Common myeloid progenitor, CD34-positive (primary cell): ENCODE measurements at regions of chr1 and their contacts with region 1.

Region 1: DNA sequence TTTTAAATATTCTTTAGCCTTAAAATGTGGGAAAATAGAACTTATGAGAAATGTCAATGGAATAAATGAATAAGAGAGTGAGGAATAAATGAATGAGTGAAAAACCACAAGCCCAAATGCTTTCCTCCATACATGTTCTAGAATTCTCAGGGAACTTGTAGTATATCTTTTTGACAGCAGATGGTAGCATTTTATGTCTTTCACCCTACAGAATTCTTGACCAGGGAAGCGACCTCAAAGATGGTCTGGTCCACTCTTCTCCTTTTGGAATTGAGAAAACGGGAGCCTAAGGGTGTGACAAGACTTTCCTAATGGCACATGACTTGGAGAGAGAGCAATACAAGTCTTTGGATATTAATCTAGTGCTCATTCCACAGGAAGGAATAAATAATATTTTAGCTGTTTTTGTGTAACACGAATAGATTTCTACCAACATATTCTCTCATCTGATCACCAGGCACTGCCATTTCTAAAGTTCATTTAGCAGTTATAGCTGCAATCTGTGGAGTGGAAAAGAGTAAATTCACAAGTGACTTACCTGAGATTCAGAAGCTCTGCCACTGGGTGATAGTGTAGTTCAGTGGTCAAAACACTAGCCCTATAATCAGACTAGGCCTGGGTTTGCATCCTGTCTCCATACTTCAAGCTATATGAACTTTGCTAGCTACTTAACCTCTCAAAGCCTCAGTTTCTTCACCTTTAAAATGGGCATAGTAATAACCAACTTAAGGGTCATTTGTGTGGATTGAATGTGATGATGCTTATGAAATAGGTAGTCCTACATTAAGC is 15.0 kb upstream of the F5 start:
- DNase-seq: peak; percentile 41 to 57 (median 52)
- H3K4me3 ChIP-seq: no peak overlapping the region
- H3K27ac ChIP-seq: no peak overlapping the region
- H3K4me1 ChIP-seq: peaks cover 21 to 44% (median 28%) of the 10 kb centered on the region in 4 experiments
- H3K27me3 ChIP-seq: no peaks in the 10 kb centered on the region

Region 2: DNA sequence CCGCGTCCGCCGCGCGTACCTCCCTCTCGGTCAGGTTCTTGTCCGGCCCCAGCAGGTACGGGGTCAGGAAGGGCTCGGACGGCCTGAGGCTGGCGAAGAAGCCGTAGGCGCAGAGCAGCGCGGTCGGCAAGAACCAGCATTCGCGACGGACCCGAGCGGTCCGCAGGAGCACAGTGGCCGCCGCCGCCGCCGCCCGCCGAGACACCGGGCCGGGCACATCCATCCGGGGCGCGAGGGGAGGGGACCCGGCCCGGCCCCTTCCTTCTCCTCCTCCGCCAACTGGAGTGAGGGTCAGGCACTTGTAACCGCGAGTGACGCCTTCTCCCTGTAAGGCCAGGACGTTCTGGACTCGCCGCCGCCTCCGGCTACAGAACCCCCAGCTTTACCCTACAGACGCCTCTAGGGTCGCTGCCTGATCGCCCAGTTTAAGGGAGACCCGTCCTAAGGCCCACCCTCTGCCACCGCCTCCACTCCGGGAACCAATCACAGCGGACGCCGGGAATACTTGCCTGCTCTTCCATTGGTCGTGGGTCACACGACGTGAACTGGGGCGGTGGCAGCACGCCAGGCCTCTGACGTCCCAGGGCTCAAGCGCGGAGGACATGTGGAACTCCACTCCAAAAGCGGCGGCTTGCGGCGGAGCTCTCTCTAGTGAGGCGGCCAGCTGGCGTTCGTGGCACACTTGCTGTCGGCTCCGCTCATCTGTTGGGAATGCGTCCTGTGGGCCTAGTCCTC is 115.6 kb before region 1 on chr1 and contains the start of gene SLC19A2:
- CTCF ChIA-PET with region 1: no interaction called
- POLR2A ChIA-PET with region 1: no interaction called
- DNase-seq: peak; percentile 98 to 99 (median 99)
- H3K4me3 ChIP-seq: peak within 1 kb of the TSS; percentile 72 to 87 (median 80)
- H3K27ac ChIP-seq: peak within 1 kb of the TSS in 1 of 2 experiments; percentile 85
- H3K4me1 ChIP-seq: peaks cover 23 to 38% (median 31%) of the 10 kb centered on the region in 4 experiments
- H3K27me3 ChIP-seq: no peaks in the 10 kb centered on the region

Region 3: DNA sequence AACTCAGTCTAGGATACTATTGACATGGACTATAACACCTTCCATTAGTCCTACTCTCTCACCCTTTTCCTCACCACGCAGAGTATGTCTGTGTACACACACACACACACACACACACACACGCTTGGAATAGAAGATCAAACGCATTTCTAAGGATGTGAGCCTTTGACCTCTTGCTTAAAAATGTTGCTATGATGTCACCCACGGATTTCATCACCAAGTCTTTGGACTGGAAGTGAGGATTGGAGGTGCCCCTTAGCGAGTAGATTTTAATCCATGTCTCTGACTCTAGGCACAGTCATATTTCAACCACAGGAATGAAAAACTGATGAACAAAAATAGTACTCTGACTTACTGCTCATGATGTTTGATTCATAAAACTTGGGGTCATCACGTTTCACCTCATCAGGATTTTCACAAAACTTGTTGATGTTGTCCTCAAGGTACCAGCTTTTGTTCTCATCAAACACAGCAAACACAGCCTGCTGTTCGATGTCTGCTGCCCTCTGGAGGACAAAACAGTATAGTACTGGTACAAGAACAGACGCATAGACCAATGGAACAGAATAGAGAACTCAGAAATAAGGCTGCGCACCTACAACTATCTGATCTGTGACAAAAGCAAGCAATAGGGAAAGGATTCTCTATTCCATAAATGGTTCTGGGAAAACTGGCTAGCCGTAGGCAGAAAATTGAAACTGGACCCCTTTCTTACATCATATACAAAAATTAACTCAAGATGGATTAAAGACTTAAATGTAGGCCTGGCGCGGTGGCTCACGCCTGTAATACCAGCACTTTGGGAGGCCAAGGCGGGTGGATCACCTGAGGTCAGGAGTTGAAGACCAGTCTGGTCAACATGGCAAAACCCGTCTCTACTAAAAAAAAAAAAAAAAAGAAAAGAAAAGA is 54.9 kb before region 1 on chr1:
- CTCF ChIA-PET with region 1: interaction called, 31 read pairs
- POLR2A ChIA-PET with region 1: no interaction called
- DNase-seq: peak; percentile 82 to 91 (median 87)
- H3K4me3 ChIP-seq: no peak overlapping the region
- H3K27ac ChIP-seq: no peak overlapping the region
- H3K4me1 ChIP-seq: no peaks in the 10 kb centered on the region
- H3K27me3 ChIP-seq: no peaks in the 10 kb centered on the region

Region 4: GRCh38 chr1:169615803-169616202 is 14.5 kb after region 1 on chr1:
- CTCF ChIA-PET with region 1: interaction called, 13 read pairs
- POLR2A ChIA-PET with region 1: no interaction called
- DNase-seq: no peak
- H3K4me3 ChIP-seq: no peak overlapping the region
- H3K27ac ChIP-seq: no peak overlapping the region
- H3K4me1 ChIP-seq: peaks cover 0 to 5% (median 0%) of the 10 kb centered on the region in 4 experiments
- H3K27me3 ChIP-seq: no peaks in the 10 kb centered on the region

Region 5: DNA sequence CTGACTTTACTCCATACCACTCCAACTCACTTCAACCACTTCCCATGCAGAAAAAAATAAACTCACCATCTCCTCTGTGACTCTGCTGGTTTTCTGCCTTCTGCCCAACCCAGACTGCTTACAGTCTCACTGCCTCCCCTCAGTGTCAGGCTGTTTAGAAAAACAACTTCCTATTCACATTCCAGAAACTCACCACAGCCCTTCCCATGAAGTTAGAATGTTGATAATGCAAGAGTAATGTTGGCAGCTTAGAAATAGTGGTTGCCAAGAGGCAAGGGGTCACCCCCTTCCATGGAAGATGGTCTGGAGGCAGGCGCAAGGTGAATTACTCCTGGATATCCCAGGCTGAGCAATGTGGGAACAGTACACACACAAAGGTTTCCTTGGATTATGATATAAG is 28.7 kb after region 1 on chr1 and contains the start of gene SELP:
- CTCF ChIA-PET with region 1: interaction called, 11 read pairs
- POLR2A ChIA-PET with region 1: no interaction called
- DNase-seq: peak in 2 of 3 donors; percentile 28 to 57
- H3K4me3 ChIP-seq: peak within 1 kb of the TSS in 2 of 7 experiments; percentile 1 to 45
- H3K27ac ChIP-seq: peak within 1 kb of the TSS in 1 of 2 experiments; percentile 37
- H3K4me1 ChIP-seq: peaks cover 9 to 44% (median 30%) of the 10 kb centered on the region in 4 experiments
- H3K27me3 ChIP-seq: no peaks in the 10 kb centered on the region

Region 6: GRCh38 chr1:169694304-169695075 is 93.2 kb after region 1 on chr1:
- CTCF ChIA-PET with region 1: interaction called, 43 read pairs
- POLR2A ChIA-PET with region 1: no interaction called
- DNase-seq: peak; percentile 69 to 94 (median 90)
- H3K4me3 ChIP-seq: peak overlapping the region in 2 of 7 experiments; percentile 28 to 43
- H3K27ac ChIP-seq: peak overlapping the region; percentile 52 to 77
- H3K4me1 ChIP-seq: peaks cover 52 to 97% (median 82%) of the 10 kb centered on the region in 4 experiments
- H3K27me3 ChIP-seq: no peaks in the 10 kb centered on the region

Region 7: DNA sequence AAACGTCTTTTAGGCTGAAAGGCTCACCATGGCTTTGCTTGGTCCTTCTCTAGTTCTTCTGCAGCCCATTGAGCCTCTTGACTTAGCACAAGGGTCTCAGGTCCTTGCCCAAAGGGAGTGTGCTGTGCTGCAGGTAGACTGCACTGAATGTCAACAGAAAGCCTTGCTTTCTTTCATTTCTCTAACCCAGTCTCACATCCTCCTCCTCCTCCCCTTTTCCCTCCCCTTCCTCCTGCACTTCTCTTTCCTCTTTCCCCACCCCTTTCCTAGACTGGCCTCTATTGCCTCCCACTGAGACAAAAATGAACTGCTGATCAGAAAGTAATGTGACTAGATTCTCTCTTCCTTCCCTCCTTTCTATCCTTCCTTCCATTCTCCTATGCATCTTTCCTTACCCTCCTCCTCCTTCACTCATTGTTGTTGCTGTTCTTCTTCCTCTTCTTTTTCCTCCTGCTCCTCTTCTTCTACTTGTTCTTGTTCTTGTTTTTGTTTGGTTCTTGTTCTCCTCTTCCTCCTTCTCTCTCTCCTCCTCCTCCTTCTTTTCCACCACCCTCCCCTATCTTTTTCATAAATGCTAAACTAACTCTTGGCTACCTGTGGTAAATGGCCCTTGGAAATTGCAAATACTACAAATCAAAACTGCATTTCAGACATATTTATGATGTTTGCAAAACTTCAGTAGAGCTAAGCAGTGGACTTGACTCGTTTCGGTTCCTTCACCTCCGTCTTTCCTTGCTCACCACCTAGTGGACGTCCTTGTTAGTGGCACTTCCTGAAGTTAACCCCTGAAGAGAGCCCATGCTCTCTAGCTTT is 110.4 kb after region 1 on chr1 and contains the start of gene SELL:
- CTCF ChIA-PET with region 1: interaction called, 107 read pairs
- POLR2A ChIA-PET with region 1: no interaction called
- DNase-seq: peak; percentile 90 to 94 (median 93)
- H3K4me3 ChIP-seq: peak within 1 kb of the TSS; percentile 46 to 89 (median 82)
- H3K27ac ChIP-seq: peak within 1 kb of the TSS; percentile 75 to 85
- H3K4me1 ChIP-seq: peaks cover 16 to 41% (median 37%) of the 10 kb centered on the region in 4 experiments
- H3K27me3 ChIP-seq: no peaks in the 10 kb centered on the region